Uterus (tissue), 4 donors: ENCODE measurements at regions of chr18 and their contacts with region 1.

Region 1: GRCh38 chr18:57630002-57630753 is 8.5 kb upstream of the NARS1 start:
- DNase-seq: peak; percentile 97
- H3K4me3 ChIP-seq: peak overlapping the region; percentile 59 to 78
- H3K27ac ChIP-seq: peak overlapping the region; percentile 79 to 86
- H3K4me1 ChIP-seq: no peaks in the 10 kb centered on the region
- H3K27me3 ChIP-seq: no peaks in the 10 kb centered on the region
- CTCF ChIP-seq: peak; percentile 80 to 89 (median 87)
- POLR2A ChIP-seq: peak; percentile 23 to 37

Region 2: GRCh38 chr18:57803103-57803969 is 173.2 kb after region 1 on chr18 and contains the start of gene ATP8B1:
- intact Hi-C with region 1: loop called (anchors 10 kb)
- DNase-seq: peak; percentile 75 to 79
- H3K4me3 ChIP-seq: peak within 1 kb of the TSS; percentile 59 to 69
- H3K27ac ChIP-seq: peak within 1 kb of the TSS; percentile 81 to 90
- H3K4me1 ChIP-seq: no peaks in the 10 kb centered on the region
- H3K27me3 ChIP-seq: no peaks in the 10 kb centered on the region
- CTCF ChIP-seq: peak in 2 of 4 experiments; percentile 15 to 22
- POLR2A ChIP-seq: peak; percentile 66 to 72
- total RNA-seq, gene ATP8B1: 18.4 to 24.9 (median 22.1) TPM